ENCODE measurements at regions of chr3 and their contacts with region 1.

Region 1: DNA sequence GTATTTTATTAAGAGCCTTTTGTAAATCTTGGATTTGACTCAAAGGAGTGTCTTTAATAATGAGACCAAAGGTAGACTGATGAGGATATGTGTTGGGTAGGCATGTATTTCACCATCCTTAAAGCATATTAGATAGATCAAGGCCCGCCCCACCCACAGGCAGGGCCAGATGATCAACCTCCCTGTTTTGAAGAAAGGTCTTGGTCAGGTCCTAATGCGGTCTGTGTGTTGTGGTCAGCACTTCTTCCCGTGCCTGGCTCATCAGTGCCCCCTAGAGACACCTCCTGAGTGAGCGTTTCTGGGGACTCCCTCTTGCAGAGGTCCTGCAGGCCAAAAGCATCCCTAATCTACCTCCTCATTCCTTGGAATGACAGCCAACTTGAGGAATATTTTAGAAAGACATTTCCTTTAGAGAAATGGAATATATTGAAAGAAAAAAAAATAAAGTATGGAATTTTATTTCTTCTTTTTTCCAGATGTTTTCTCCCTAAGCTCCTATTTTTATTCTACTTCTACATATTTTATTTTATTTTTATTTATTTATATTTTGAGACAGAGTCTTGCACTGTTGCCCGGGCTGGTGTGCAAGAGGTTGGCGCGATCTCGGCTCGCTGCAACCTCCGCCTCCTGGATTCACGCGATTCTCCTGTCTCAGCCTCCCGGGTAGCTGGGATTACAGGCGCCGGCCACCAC is 6.0 kb downstream of the TM4SF4 start:
- DNase-seq: peak; percentile 84
- H3K4me3 ChIP-seq: no peak overlapping the region
- H3K27ac ChIP-seq: no peak overlapping the region
- H3K4me1 ChIP-seq: peaks cover 10% of the 10 kb centered on the region
- H3K27me3 ChIP-seq: no peaks in the 10 kb centered on the region

Region 2: DNA sequence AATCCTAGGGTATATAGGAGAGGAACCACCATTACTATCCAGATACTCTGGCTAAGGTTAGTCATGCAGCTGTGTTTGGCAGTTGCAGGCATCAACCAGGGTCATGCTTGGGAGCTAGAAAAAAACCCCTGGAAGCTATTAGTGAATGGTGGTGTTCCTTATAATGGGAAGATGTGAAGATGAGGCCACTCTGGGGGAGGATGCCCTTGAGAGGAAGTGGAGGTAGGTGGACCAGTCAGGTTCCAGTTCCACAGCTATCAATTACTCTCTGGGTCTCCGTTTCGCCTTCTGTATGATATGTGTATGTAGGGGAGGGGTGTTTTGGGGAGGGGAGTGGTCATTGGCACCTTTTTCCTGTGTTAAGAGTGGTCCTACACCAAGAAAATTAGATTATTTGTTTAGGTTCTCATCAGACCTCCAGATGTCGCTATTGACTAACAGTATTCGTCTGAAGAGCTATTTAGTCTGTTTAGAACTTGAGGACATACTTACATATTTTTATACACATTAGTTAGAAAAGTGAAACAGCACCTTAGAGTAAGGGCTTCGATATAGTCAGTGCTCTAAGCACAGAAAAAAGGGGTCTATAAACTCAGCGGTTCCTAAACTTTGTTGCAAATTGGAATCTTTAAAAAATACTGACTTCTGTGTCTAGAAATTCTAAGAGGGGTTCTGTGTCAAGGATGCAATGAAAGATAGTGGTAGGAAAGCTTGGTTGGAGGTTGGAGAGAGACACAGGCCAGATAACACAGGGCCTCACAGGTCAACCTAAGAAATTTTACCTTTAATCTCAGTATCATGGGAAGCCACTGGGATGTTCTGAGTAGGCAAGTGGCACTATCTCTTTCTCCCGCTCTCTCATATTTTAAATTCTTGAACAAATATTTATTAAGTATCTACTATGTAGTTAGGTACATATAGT is 360.2 kb before region 1 on chr3:
- in situ Hi-C with region 1: loop called (anchors 25 kb)
- DNase-seq: peak; percentile 78
- H3K4me3 ChIP-seq: no peak overlapping the region
- H3K27ac ChIP-seq: no peak overlapping the region
- H3K4me1 ChIP-seq: peaks cover 6% of the 10 kb centered on the region; the same call in 1 of the 2 replicates
- H3K27me3 ChIP-seq: no peaks in the 10 kb centered on the region

Region 3: GRCh38 chr3:149352556-149352955 is 127.9 kb before region 1 on chr3:
- in situ Hi-C with region 1: loop called (anchors 5 kb)
- DNase-seq: peak; percentile 79
- H3K4me3 ChIP-seq: no peak overlapping the region
- H3K27ac ChIP-seq: no peak overlapping the region
- H3K4me1 ChIP-seq: 0 out of 2 replicates have a peak, but pooled peaks cover 4% of the 10 kb centered on the region
- H3K27me3 ChIP-seq: no peaks in the 10 kb centered on the region

Region 4: DNA sequence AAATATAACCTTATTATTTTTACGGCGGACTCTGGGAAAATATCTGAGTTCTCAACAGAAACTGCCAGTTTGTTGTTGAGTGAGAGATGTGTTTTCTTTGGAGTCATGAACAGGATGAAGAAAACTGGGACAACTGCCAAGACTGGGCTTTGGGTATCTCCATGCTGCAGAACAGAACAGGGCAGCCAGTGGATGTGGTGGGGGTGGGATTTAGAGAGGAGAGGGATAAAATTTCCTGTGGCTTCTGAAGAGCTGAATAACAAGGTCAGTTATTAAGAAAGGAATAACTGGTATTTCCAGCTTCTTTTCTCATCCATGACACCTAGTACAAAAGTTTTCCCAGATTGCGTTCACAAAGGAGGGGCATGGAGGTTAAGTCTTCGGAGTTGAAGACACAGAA is 84.7 kb before region 1 on chr3:
- in situ Hi-C with region 1: loop called (anchors 5 kb)
- DNase-seq: peak; percentile 20
- H3K4me3 ChIP-seq: no peak overlapping the region
- H3K27ac ChIP-seq: no peak overlapping the region
- H3K4me1 ChIP-seq: peaks cover 32% of the 10 kb centered on the region
- H3K27me3 ChIP-seq: no peaks in the 10 kb centered on the region

Region 5: GRCh38 chr3:149638228-149639092 is 158.0 kb after region 1 on chr3:
- in situ Hi-C with region 1: no loop called
- DNase-seq: peak; percentile 82
- H3K4me3 ChIP-seq: peak overlapping the region; percentile 76
- H3K27ac ChIP-seq: peak overlapping the region; percentile 86
- H3K4me1 ChIP-seq: peaks cover 38% of the 10 kb centered on the region
- H3K27me3 ChIP-seq: no peaks in the 10 kb centered on the region